Mucosa of descending colon (tissue), 3 donors: ENCODE measurements at regions of chr7 and their contacts with region 1.

Region 1: GRCh38 chr7:89133819-89134218 is 338.3 kb upstream of the TEX47 start:
- DNase-seq: no peak
- ATAC-seq: no peak
- H3K4me3 ChIP-seq: no peak overlapping the region
- H3K4me1 ChIP-seq: no peaks in the 10 kb centered on the region
- CTCF ChIP-seq: no peak

Region 2: GRCh38 chr7:89072081-89072480 is 61.7 kb before region 1 on chr7:
- intact Hi-C with region 1: loop called in 1 of 2 experiments (anchors 10 kb)
- DNase-seq: peak in 1 of 3 donors; percentile 2
- ATAC-seq: no peak
- H3K4me3 ChIP-seq: no peak overlapping the region
- H3K4me1 ChIP-seq: no peaks in the 10 kb centered on the region
- CTCF ChIP-seq: no peak